Mammary epithelial cell (primary cell): ENCODE measurements at regions of chr11 and their contacts with region 1.

Region 1: GRCh38 chr11:26583538-26583937 is 11.5 kb upstream of the MUC15 start:
- DNase-seq: peak; percentile 91
- H3K4me3 ChIP-seq: peak overlapping the region in 1 of 3 experiments; percentile 5
- H3K27ac ChIP-seq: peak overlapping the region; percentile 52
- H3K4me1 ChIP-seq: peaks cover 21% of the 10 kb centered on the region
- H3K27me3 ChIP-seq: no peaks in the 10 kb centered on the region
- CTCF ChIP-seq: no peak

Region 2: DNA sequence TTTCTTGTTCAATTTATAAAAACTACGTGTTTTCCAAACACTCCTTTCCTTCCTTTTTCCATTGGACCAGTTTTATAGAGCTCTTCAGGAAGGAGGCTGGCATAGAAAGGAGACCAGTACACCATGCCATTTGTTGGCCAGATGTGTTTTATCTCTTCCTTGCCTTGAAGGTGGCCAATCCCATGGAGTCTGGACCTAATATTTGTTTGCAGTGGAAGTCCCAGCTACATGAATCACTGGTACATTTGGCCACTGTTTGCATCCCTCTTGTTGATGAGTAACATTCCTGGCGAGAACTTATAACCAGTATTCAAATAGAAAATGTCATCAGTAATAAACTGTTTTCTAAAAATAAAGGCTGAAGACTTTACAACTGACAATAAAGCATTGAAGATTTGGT is 141.4 kb before region 1 on chr11:
- CTCF ChIA-PET with region 1: no interaction called
- dilution Hi-C with region 1: no loop called
- in situ Hi-C with region 1: no loop called
- intact Hi-C with region 1: no loop called
- DNase-seq: no peak
- H3K4me3 ChIP-seq: no peak overlapping the region
- H3K27ac ChIP-seq: no peak overlapping the region
- H3K4me1 ChIP-seq: no peaks in the 10 kb centered on the region
- H3K27me3 ChIP-seq: no peaks in the 10 kb centered on the region
- CTCF ChIP-seq: no peak

Region 3: DNA sequence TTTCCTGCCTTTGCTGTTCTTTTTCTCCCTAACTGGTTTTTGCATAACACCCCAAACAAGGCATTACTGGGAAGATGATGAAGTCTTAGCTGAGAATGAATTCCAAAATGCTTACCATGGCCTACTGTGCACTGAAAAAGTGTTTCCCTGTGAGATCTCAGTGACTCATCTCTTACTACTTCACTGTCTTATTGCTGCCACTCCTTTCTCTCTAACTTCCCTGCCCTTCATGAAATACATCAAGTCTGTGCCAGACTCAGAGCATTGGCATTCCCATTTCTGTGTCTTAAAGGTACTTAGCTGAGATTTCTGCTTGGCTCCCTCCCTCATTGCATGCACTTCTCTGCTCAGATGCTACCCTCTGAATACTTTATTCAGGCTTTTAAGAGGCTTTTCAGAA is 37.6 kb after region 1 on chr11:
- CTCF ChIA-PET with region 1: no interaction called
- dilution Hi-C with region 1: no loop called
- in situ Hi-C with region 1: no loop called
- intact Hi-C with region 1: loop called (anchors 2 kb)
- DNase-seq: peak; percentile 91
- H3K4me3 ChIP-seq: no peak overlapping the region
- H3K27ac ChIP-seq: peak overlapping the region; percentile 98
- H3K4me1 ChIP-seq: peaks cover 31% of the 10 kb centered on the region
- H3K27me3 ChIP-seq: no peaks in the 10 kb centered on the region
- CTCF ChIP-seq: no peak